Psoas muscle (tissue), 8 donors: ENCODE measurements at regions of chr9 and their contacts with region 1.

Region 1: DNA sequence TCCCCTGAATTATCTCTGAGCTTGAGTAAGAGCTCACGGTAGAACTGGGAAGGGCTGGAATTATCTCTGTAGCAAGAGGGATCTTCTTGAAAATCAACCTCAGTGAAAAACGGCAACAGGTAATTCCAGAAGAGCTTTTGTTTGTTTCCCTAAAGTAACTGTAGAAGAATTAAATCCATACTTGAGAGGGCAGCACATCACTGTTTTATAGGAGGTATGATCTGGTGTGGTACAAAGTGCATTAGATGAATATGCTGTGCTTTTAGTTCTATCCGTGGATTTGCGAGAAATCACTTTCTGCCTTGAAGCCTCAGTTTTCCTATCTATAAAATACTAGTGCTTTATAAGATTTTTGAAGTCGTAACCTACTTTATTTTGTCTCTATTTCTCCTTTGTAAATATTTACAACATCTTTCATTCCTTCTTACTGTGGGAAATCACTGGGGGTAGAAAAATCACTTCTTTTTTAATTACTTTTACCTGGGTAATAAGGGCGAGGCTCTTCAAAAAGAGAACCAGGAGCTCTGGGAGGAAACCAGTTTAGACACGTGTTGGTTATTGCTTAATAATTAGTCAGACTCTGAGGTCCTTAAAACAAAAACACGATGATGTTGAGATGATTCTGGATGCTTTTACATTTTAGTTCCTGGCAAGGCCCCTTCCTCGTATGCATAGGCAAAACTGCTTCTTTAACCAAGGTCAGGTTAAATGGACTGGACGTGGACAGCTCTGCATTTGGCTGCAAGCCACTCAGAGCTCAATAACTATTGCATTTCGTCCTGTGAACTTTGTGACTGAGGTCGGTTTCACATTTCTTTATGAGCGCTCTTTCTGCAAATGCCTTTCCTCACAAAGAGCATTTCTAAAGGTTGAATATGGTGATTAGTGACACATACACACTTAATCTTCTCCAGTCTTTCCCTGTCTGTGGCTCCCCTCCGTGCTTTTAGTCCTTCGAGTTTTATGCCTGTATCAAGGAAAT is 376.1 kb downstream of the BRINP1 start:
- DNase-seq: no peak
- ATAC-seq: peak in 3 of 4 donors; percentile 28 to 78 (median 60)
- H3K4me3 ChIP-seq: no peak overlapping the region
- H3K27ac ChIP-seq: no peak overlapping the region
- H3K4me1 ChIP-seq: peaks cover 18% of the 10 kb centered on the region
- H3K27me3 ChIP-seq: no peaks in the 10 kb centered on the region
- CTCF ChIP-seq: no peak

Region 2: GRCh38 chr9:118829334-118829733 is 163.8 kb before region 1 on chr9:
- intact Hi-C with region 1: loop called in 1 of 2 experiments (anchors 5 kb)
- DNase-seq: no peak
- ATAC-seq: peak in 2 of 4 donors; percentile 62 to 76
- H3K4me3 ChIP-seq: no peak overlapping the region
- H3K27ac ChIP-seq: no peak overlapping the region
- H3K4me1 ChIP-seq: no peaks in the 10 kb centered on the region
- H3K27me3 ChIP-seq: no peaks in the 10 kb centered on the region
- CTCF ChIP-seq: peak; percentile 67

Region 3: DNA sequence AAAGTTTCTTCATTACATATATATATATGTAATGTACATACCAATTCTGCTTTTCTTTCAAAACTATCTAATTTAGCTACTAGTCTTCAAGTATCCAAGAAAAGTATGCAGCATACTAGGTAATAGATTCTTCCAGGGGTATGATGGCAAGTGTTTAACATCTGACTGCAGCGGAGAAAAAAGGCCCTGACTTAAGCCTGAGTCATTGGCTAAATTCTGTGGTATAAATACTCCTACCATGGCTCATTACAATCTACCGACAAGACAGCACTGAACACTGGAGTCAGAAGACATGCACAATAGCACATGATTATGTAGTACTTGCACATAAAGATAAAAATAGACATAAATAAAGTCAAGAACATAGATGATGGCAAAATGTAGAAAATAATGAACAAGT is 63.8 kb before region 1 on chr9:
- intact Hi-C with region 1: no loop called
- DNase-seq: no peak
- ATAC-seq: peak; percentile 96 to 99 (median 98)
- H3K4me3 ChIP-seq: no peak overlapping the region
- H3K27ac ChIP-seq: peak overlapping the region; percentile 56
- H3K4me1 ChIP-seq: peaks cover 25% of the 10 kb centered on the region
- H3K27me3 ChIP-seq: no peaks in the 10 kb centered on the region
- CTCF ChIP-seq: no peak

Region 4: GRCh38 chr9:118954857-118955256 is 38.2 kb before region 1 on chr9:
- intact Hi-C with region 1: no loop called
- DNase-seq: no peak
- ATAC-seq: no peak
- H3K4me3 ChIP-seq: no peak overlapping the region
- H3K27ac ChIP-seq: no peak overlapping the region
- H3K4me1 ChIP-seq: no peaks in the 10 kb centered on the region
- H3K27me3 ChIP-seq: peaks cover 0 to 3% (median 0%) of the 10 kb centered on the region in 3 donors
- CTCF ChIP-seq: no peak

Region 5: GRCh38 chr9:119026120-119026519 is 33.0 kb after region 1 on chr9:
- intact Hi-C with region 1: loop called in 1 of 2 experiments (anchors 2 kb)
- DNase-seq: peak; percentile 30 to 74
- ATAC-seq: peak; percentile 45 to 76 (median 63)
- H3K4me3 ChIP-seq: no peak overlapping the region
- H3K27ac ChIP-seq: peak overlapping the region; percentile 86
- H3K4me1 ChIP-seq: peaks cover 16% of the 10 kb centered on the region
- H3K27me3 ChIP-seq: no peaks in the 10 kb centered on the region
- CTCF ChIP-seq: no peak

Region 6: GRCh38 chr9:119289740-119290433 is 296.8 kb after region 1 on chr9:
- intact Hi-C with region 1: loop called (anchors 5 kb)
- DNase-seq: no peak
- ATAC-seq: peak; percentile 67 to 91 (median 78)
- H3K4me3 ChIP-seq: no peak overlapping the region
- H3K27ac ChIP-seq: no peak overlapping the region
- H3K4me1 ChIP-seq: no peaks in the 10 kb centered on the region
- H3K27me3 ChIP-seq: no peaks in the 10 kb centered on the region
- CTCF ChIP-seq: peak; percentile 88